ENCODE measurements at regions of chr14 and their contacts with region 1.

Region 1: DNA sequence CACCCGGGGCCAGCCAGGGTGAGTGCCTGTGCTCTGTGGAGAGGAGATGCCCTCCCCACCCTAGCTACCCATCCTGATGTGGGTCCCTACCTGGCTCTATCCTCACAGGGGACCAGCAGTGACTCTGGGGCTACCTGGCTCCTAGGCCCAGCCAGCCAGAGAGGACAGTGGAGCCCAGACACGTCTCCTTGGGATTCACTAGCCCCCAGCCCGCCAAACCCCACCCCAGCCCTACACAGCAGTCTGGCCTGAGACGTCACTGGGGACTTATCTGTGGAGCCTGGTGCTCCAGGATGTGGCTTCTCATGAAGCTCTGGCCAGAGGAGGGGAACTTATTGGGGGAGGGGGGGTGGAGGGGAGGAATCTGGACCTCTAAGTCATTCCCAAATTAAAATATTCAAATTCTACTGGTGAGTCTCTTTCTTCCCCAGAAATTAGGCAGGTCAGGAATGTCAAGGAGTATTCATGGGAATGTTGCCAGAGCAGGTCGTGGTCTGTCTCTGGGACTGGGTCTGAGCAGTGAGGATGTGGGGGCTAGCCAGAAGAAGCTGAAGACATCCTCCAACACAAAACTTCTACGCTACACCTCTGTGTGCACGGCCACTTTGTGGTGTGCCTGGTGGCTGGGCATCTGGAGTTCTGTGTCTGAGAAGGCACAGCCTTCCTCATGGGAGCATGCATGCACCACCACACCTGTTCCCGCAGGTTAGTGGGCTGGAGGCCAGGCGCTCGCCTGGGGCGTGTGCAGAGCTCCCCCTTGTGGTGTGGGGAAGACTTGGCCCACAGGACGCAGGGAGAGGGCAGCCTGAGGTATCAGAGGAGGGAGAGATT is 2.7 kb downstream of the CMTM5 start:
- DNase-seq: peak; percentile 63
- H3K4me3 Mint-ChIP-seq: no peak overlapping the region
- H3K27ac Mint-ChIP-seq: no peak overlapping the region
- H3K4me1 Mint-ChIP-seq: no peaks in the 10 kb centered on the region
- H3K27me3 Mint-ChIP-seq: peaks cover 3% of the 10 kb centered on the region

Region 2: DNA sequence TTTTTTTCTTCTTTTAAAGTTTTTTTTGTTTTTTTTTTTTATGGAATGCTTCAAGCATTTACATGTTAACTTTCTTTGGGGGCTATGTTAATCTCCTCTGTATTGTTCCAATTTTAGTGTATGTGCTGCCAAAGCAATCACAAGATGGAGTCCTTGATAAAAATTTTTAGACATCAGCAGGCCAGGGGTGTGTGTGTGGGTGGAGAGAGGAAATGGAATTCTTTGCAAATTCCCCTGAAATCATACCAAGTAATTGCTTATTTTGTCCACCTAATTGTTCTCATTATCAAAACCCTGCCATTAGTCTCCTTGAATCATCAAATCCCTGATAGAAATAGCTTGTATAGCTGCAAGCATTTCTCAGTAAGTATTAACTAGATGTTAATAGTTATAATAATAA is 120.2 kb before region 1 on chr14:
- CTCF ChIA-PET with region 1: interaction called, 18 read pairs
- POLR2A ChIA-PET with region 1: no interaction called
- DNase-seq: no peak
- H3K4me3 Mint-ChIP-seq: no peak overlapping the region
- H3K27ac Mint-ChIP-seq: no peak overlapping the region
- H3K4me1 Mint-ChIP-seq: no peaks in the 10 kb centered on the region
- H3K27me3 Mint-ChIP-seq: peaks cover 41% of the 10 kb centered on the region

Region 3: DNA sequence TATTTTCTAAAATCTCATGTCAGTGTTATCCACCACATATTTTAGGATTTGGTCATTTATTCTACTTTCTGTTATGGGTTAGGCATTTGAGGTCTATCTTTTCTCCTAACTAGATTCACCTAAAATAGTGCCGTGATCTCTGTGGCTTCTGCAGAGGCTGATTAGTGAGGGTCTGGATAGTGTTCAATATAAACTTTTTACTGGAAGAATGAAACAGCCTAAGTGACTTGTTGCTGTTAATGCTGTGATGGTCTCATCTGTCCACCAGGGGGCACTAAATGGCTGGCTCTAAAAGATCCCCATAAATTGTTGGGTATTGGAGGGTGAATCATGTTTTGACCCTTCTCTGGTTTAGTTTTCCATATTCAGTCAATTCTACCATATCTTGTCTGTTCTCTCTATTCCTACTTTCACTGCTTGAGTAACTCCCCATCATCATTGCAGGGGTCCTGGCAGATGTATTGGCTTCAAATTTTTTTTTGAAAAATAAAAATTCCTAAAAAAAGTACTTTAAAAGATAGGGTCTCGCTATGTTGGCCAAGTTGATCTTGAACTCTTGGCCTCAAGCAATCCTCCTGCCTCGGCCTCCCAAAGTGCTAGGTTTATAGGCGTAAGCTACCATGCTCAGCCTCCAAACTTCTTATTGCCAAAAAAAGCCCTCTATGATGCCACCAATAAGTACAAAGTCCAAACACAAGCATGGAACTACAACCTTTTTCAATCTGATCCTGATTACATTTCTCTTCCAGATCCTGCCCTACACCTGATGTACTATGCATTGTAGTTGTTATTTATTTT is 51.4 kb before region 1 on chr14:
- CTCF ChIA-PET with region 1: interaction called, 12 read pairs
- POLR2A ChIA-PET with region 1: interaction called, 3 read pairs
- DNase-seq: peak; percentile 67
- H3K4me3 Mint-ChIP-seq: no peak overlapping the region
- H3K27ac Mint-ChIP-seq: no peak overlapping the region
- H3K4me1 Mint-ChIP-seq: peaks cover 8% of the 10 kb centered on the region
- H3K27me3 Mint-ChIP-seq: no peaks in the 10 kb centered on the region

Region 4: GRCh38 chr14:23421594-23421993 is 42.0 kb after region 1 on chr14:
- CTCF ChIA-PET with region 1: no interaction called
- POLR2A ChIA-PET with region 1: no interaction called
- DNase-seq: peak; percentile 32
- H3K4me3 Mint-ChIP-seq: no peak overlapping the region
- H3K27ac Mint-ChIP-seq: peak overlapping the region; percentile 14
- H3K4me1 Mint-ChIP-seq: peaks cover 20% of the 10 kb centered on the region
- H3K27me3 Mint-ChIP-seq: no peaks in the 10 kb centered on the region

Region 5: DNA sequence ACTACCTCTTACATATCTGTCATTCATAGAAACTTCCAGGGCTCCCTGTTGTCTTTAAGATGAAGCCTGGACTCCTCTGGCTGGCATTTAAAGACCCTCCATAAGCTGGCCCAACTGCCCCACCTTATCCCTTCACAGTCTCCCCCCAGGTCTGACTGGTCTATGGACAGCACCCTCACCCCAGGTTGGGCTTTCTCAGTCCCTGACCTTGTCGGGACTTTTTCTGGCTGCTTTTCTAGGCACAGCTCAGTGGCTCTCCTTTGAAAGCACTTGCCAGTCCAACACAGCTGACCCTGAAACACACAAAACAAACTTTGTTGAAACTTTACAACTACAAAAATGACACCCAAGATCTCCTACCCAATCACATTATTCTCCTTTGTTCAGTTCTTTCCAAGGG is 69.7 kb after region 1 on chr14:
- CTCF ChIA-PET with region 1: no interaction called
- POLR2A ChIA-PET with region 1: no interaction called
- DNase-seq: no peak
- H3K4me3 Mint-ChIP-seq: no peak overlapping the region
- H3K27ac Mint-ChIP-seq: no peak overlapping the region
- H3K4me1 Mint-ChIP-seq: peaks cover 10% of the 10 kb centered on the region
- H3K27me3 Mint-ChIP-seq: peaks cover 10% of the 10 kb centered on the region

Region 6: DNA sequence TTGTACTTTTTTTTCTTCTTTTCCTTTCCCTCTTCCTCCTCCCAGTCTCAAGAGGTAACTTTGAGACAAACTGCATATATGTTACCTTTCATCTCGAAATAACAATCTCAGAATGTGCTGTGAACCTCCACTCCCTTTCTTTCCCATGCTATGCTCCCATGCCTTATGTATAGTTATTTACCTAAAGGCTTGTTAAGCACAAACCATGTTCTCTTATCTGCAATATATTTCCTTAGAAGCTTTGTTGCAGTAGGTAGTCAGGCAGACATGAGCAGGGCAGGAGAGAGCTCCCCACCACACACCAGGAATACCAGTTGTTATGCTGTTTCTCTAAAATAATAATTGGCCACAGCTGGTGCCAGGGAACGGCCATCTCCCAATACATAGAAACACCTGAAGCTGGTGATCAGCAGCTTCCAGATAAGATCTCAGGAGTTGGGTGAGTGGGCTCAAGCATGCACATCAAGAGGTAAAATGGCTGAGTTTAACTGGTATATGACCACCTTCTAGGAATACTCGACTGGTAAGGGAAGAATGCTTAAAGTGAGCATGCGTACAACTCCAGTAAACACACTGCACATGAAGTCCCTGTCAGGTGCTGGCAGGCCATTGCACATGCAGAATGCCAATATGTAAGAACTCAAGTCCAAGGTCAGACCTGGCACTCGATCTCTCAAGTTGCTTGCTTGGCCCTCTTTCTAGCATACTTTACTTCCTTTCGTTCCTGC is 241.8 kb after region 1 on chr14:
- CTCF ChIA-PET with region 1: no interaction called
- POLR2A ChIA-PET with region 1: no interaction called
- DNase-seq: no peak
- H3K4me3 Mint-ChIP-seq: no peak overlapping the region
- H3K27ac Mint-ChIP-seq: no peak overlapping the region
- H3K4me1 Mint-ChIP-seq: no peaks in the 10 kb centered on the region
- H3K27me3 Mint-ChIP-seq: peaks cover 5% of the 10 kb centered on the region